Psoas muscle (tissue), 8 donors: ENCODE measurements at regions of chr1 and their contacts with region 1.

Region 1: GRCh38 chr1:24385160-24385940 is 28.2 kb downstream of the STPG1 start:
- DNase-seq: no peak
- ATAC-seq: no peak
- H3K4me3 ChIP-seq: no peak overlapping the region
- H3K27ac ChIP-seq: no peak overlapping the region
- H3K4me1 ChIP-seq: no peaks in the 10 kb centered on the region
- H3K27me3 ChIP-seq: no peaks in the 10 kb centered on the region
- CTCF ChIP-seq: no peak

Region 2: DNA sequence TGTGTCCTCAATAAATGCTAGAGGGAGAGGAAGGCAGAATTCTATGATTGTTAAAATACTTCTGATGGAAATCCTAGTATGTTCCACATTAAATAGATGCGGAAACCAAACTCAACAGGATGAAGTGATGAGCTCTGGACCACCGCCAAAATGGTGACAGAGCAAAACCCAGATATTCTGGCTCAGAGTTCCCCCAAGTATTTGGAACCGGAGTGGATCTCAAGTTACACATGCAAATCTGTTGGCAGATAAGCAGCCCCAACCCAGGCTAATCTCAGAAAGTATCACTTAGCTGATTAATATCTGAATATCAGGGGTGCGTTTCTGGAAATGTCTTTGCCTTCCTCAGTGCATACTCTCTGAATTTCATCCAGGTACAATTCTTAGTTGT is 83.6 kb before region 1 on chr1:
- intact Hi-C with region 1: no loop called
- DNase-seq: no peak
- ATAC-seq: peak in 1 of 4 donors; percentile 52
- H3K4me3 ChIP-seq: no peak overlapping the region
- H3K27ac ChIP-seq: no peak overlapping the region
- H3K4me1 ChIP-seq: no peaks in the 10 kb centered on the region
- H3K27me3 ChIP-seq: no peaks in the 10 kb centered on the region
- CTCF ChIP-seq: no peak

Region 3: GRCh38 chr1:24321697-24322469 is 63.5 kb before region 1 on chr1:
- intact Hi-C with region 1: loop called in 1 of 2 experiments (anchors 5 kb)
- DNase-seq: peak; percentile 60 to 73
- ATAC-seq: peak; percentile 77 to 85 (median 80)
- H3K4me3 ChIP-seq: peak overlapping the region; percentile 73
- H3K27ac ChIP-seq: peak overlapping the region; percentile 80
- H3K4me1 ChIP-seq: peaks cover 7% of the 10 kb centered on the region
- H3K27me3 ChIP-seq: peaks cover 1 to 42% (median 3%) of the 10 kb centered on the region in 3 donors
- CTCF ChIP-seq: no peak

Region 4: GRCh38 chr1:24341260-24341659 is 44.1 kb before region 1 on chr1:
- intact Hi-C with region 1: no loop called
- DNase-seq: peak in 1 of 2 donors; percentile 32
- ATAC-seq: no peak
- H3K4me3 ChIP-seq: no peak overlapping the region
- H3K27ac ChIP-seq: no peak overlapping the region
- H3K4me1 ChIP-seq: no peaks in the 10 kb centered on the region
- H3K27me3 ChIP-seq: no peaks in the 10 kb centered on the region
- CTCF ChIP-seq: no peak

Region 5: GRCh38 chr1:24503059-24503751 is 117.9 kb after region 1 on chr1:
- intact Hi-C with region 1: no loop called
- DNase-seq: no peak
- ATAC-seq: no peak
- H3K4me3 ChIP-seq: peak overlapping the region; percentile 61
- H3K27ac ChIP-seq: no peak overlapping the region
- H3K4me1 ChIP-seq: no peaks in the 10 kb centered on the region
- H3K27me3 ChIP-seq: peaks cover 0 to 62% (median 20%) of the 10 kb centered on the region in 3 donors
- CTCF ChIP-seq: no peak